ENCODE measurements at regions of chr18 and their contacts with region 1.

Region 1: GRCh38 chr18:3481696-3482210 is 31.8 kb downstream of the TGIF1 start:
- DNase-seq: peak; percentile 47
- H3K4me3 ChIP-seq: no peak overlapping the region
- H3K27ac ChIP-seq: no peak overlapping the region
- H3K4me1 ChIP-seq: peaks cover 4% of the 10 kb centered on the region
- H3K27me3 ChIP-seq: no peaks in the 10 kb centered on the region
- CTCF ChIP-seq: peak; percentile 53 to 55
- POLR2A ChIP-seq: no peak

Region 2: GRCh38 chr18:3402982-3403451 is 78.7 kb before region 1 on chr18:
- CTCF ChIA-PET with region 1: no interaction called
- POLR2A ChIA-PET with region 1: no interaction called
- dilution Hi-C with region 1: no loop called
- intact Hi-C with region 1: no loop called
- DNase-seq: no peak
- H3K4me3 ChIP-seq: no peak overlapping the region
- H3K27ac ChIP-seq: no peak overlapping the region
- H3K4me1 ChIP-seq: no peaks in the 10 kb centered on the region
- H3K27me3 ChIP-seq: peaks cover 0 to 3% of the 10 kb centered on the region in 2 experiments
- CTCF ChIP-seq: no peak
- POLR2A ChIP-seq: no peak

Region 3: GRCh38 chr18:3466045-3466444 is 15.7 kb before region 1 on chr18:
- CTCF ChIA-PET with region 1: interaction called, 11 read pairs
- POLR2A ChIA-PET with region 1: no interaction called
- dilution Hi-C with region 1: no loop called
- intact Hi-C with region 1: no loop called
- DNase-seq: peak; percentile 92
- H3K4me3 ChIP-seq: peak overlapping the region in 1 of 3 experiments; percentile 47
- H3K27ac ChIP-seq: peak overlapping the region; percentile 92
- H3K4me1 ChIP-seq: peaks cover 36% of the 10 kb centered on the region
- H3K27me3 ChIP-seq: no peaks in the 10 kb centered on the region
- CTCF ChIP-seq: no peak
- POLR2A ChIP-seq: no peak

Region 4: GRCh38 chr18:3525870-3526420 is 44.2 kb after region 1 on chr18:
- CTCF ChIA-PET with region 1: no interaction called
- POLR2A ChIA-PET with region 1: no interaction called
- dilution Hi-C with region 1: no loop called
- intact Hi-C with region 1: no loop called
- DNase-seq: peak; percentile 7
- H3K4me3 ChIP-seq: no peak overlapping the region
- H3K27ac ChIP-seq: no peak overlapping the region
- H3K4me1 ChIP-seq: no peaks in the 10 kb centered on the region
- H3K27me3 ChIP-seq: peaks cover 0 to 2% of the 10 kb centered on the region in 2 experiments
- CTCF ChIP-seq: no peak
- POLR2A ChIP-seq: no peak

Measured in endothelial cell of umbilical vein (primary cell).